Natural killer cell (primary cell): ENCODE measurements at regions of chr3 and their contacts with region 1.

Region 1: DNA sequence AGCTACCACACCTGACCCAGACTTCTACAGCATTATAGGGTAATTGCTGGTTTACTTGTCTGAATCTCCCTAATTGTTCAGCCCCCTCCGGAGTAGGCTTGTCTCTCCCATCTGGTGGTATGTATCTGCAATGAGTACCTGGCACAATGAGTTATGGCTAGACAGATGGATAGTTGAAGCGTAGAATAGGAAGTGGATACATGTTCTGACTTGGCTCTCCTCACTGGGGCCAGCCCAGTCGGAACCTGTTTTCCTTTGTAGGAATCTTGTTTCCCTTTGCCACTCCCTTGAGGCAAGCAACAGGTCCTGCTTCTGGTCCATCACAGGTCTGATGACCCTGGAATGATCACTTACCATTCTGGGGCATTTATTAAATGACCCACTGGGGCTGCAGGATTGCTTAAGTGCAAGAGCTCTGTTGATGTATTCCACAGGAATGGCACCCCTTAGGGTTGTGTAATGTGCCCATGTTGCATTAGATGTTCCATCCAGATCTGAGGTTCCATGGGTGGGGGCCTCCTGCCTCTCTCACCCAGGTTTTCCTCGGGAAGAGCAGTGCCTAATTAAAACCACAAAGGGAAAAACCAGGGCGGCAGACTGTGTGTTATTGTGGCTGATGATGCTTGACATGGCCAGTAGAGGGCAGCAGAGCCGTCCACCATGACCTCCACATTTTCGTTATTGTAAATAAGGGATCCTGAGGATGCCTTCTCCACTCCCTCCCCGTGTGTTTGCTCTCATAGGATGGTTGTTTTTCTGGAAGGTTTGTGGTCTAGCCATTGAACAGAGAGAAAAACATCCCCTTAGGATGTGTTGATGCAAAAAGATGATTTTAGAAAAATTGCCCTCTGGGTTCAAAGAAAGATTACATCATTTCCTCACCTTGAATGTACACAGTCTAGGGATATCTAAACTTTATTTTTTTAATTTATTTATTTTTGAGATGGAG is 58.0 kb downstream of the CMTM8 start:
- DNase-seq: peak; percentile 35 to 88
- ATAC-seq: peak; percentile 77 to 90 (median 82)
- H3K4me3 ChIP-seq: no peak overlapping the region
- H3K4me3 Mint-ChIP-seq: no peak overlapping the region
- H3K27ac ChIP-seq: no peak overlapping the region
- H3K27ac Mint-ChIP-seq: no peak overlapping the region
- H3K4me1 ChIP-seq: peaks cover 7% of the 10 kb centered on the region
- H3K4me1 Mint-ChIP-seq: peaks cover 0 to 5% of the 10 kb centered on the region in 2 donors
- H3K27me3 ChIP-seq: no peaks in the 10 kb centered on the region
- H3K27me3 Mint-ChIP-seq: peaks cover 0 to 3% of the 10 kb centered on the region in 2 donors
- CTCF ChIP-seq: peak; percentile 96

Region 2: GRCh38 chr3:32184187-32184730 is 112.3 kb before region 1 on chr3:
- intact Hi-C with region 1: no loop called
- DNase-seq: no peak
- ATAC-seq: no peak
- H3K4me3 ChIP-seq: no peak overlapping the region
- H3K4me3 Mint-ChIP-seq: no peak overlapping the region
- H3K27ac ChIP-seq: no peak overlapping the region
- H3K27ac Mint-ChIP-seq: no peak overlapping the region
- H3K4me1 ChIP-seq: no peaks in the 10 kb centered on the region
- H3K4me1 Mint-ChIP-seq: no peaks in the 10 kb centered on the region
- H3K27me3 ChIP-seq: no peaks in the 10 kb centered on the region
- H3K27me3 Mint-ChIP-seq: peaks cover 11 to 13% of the 10 kb centered on the region in 2 donors
- CTCF ChIP-seq: no peak

Region 3: DNA sequence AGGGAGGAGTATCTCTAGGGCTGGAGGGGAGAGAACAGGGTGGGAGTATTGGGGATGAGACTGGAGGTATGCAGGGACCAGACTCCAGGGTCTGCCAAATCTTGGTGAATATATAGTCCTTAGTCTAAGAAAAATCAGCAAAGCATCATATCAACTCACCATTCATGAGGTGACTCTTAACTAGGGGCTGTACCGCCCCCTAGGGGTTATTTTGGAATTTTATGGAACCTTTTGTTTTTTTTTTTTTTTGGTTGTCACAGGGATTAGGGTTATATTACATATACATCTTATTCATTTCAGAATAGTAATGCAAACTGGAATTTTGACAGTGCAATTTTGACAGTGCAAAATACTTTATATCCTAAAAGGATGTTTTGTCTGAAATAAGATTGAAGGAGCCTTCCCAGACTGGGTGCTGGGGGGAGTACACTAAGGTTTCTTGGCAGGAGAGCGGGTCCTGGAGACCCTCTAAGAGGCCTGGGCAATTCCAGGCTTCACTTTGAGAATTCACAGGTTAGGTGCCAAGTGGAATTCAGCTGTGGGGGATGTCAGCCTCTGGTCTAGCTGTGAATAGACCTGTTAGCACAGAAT is 102.6 kb after region 1 on chr3:
- intact Hi-C with region 1: loop called (anchors 1 kb)
- DNase-seq: peak in 1 of 2 donors; percentile 87
- ATAC-seq: peak; percentile 37 to 45 (median 42)
- H3K4me3 ChIP-seq: no peak overlapping the region
- H3K4me3 Mint-ChIP-seq: peak overlapping the region; percentile 45
- H3K27ac ChIP-seq: no peak overlapping the region
- H3K27ac Mint-ChIP-seq: peak overlapping the region; percentile 10 to 31
- H3K4me1 ChIP-seq: peaks cover 29% of the 10 kb centered on the region
- H3K4me1 Mint-ChIP-seq: peaks cover 39 to 41% of the 10 kb centered on the region in 2 donors
- H3K27me3 ChIP-seq: no peaks in the 10 kb centered on the region
- H3K27me3 Mint-ChIP-seq: no peaks in the 10 kb centered on the region
- CTCF ChIP-seq: peak; percentile 68

Region 4: DNA sequence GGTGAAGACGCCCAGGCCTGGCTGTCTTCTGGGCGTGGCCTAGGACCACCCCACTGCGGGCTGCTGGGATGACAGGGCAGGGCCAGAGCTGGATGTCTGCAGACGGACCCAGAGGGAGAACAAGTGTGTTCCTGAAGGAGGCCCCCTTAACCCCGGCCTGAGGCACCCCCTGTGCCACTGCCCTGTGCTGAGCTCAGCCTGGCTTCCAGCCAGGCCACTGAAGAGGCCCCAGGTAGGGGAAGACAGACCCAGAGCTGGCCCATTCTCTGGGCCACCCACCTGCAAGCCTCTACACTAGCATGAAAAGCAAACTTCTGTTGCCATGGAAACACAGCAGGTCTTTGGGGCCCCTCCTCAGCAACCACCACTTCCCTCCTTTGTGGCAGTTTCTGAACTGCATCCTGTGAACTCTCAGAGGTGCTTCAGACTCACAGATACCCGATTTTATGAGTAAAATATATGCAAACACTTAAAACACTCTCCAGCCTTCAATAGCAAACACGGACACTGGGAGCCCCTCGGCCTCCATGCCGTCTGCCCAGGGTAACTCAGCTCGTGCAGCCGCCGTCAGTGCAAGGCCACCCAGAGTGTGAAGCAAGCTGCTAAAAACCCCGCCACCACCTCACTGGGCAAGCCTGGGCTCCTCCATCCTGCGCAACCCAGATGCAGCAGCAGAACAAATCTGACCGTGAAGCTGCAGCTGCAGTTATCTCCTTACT is 163.7 kb after region 1 on chr3:
- intact Hi-C with region 1: no loop called
- DNase-seq: peak; percentile 42 to 96
- ATAC-seq: peak; percentile 85 to 89 (median 87)
- H3K4me3 ChIP-seq: no peak overlapping the region
- H3K4me3 Mint-ChIP-seq: peak overlapping the region; percentile 83
- H3K27ac ChIP-seq: peak overlapping the region; percentile 89
- H3K27ac Mint-ChIP-seq: no peak overlapping the region
- H3K4me1 ChIP-seq: peaks cover 61% of the 10 kb centered on the region
- H3K4me1 Mint-ChIP-seq: peaks cover 9 to 29% of the 10 kb centered on the region in 2 donors
- H3K27me3 ChIP-seq: no peaks in the 10 kb centered on the region
- H3K27me3 Mint-ChIP-seq: no peaks in the 10 kb centered on the region
- CTCF ChIP-seq: no peak

Region 5: GRCh38 chr3:32667122-32667521 is 370.6 kb after region 1 on chr3:
- intact Hi-C with region 1: loop called (anchors 10 kb)
- DNase-seq: no peak
- ATAC-seq: no peak
- H3K4me3 ChIP-seq: no peak overlapping the region
- H3K4me3 Mint-ChIP-seq: no peak overlapping the region
- H3K27ac ChIP-seq: no peak overlapping the region
- H3K27ac Mint-ChIP-seq: no peak overlapping the region
- H3K4me1 ChIP-seq: no peaks in the 10 kb centered on the region
- H3K4me1 Mint-ChIP-seq: no peaks in the 10 kb centered on the region
- H3K27me3 ChIP-seq: no peaks in the 10 kb centered on the region
- H3K27me3 Mint-ChIP-seq: peaks cover 7% of the 10 kb centered on the region in 2 donors
- CTCF ChIP-seq: no peak